CD4-positive, alpha-beta memory T cell (primary cell): ENCODE measurements at regions of chr19 and their contacts with region 1.

Region 1: DNA sequence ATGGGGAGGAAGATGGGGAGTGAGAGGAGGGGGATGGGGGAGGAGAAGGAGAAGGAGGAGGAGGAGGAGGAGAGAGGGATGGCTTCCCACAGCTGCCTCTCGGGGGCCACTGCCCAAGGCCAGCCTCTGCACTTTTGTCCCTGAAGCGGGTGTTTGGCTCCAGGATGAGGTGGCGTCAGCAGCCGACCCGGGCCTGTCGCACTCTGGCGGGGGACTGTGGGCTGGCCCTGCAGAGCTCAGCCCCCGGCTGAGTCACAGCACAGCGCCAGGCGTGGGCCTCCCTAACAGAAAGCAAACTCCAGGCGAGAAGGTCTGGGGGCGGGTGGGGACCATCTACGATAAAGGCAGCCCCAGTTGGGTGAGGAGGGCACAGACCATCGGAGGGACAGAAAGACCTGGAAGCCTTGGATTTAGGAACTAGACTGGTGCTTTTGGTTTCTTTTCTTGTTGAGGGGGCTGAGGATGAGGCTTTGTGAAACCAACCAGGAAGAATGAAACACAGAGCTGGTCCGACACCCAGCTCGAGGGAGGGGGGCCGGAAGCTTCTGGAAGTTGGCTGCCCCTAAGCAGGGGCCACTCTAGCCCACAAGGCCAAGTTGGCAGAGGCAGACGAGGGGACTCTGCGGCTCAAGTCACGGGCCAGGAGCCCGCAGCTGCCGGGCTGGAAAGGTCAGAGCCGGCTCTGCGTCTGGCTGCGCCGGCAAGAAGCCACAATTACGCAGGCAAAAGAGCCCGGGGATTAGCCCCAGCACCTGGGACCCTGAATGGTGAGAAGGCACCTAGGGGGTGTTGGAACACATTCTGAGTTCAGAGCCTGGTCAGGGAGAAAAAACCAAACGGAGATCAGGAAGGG is 18.2 kb downstream of the LSM4 start:
- DNase-seq: peak; percentile 73 to 88 (median 78)
- H3K4me3 ChIP-seq: peak overlapping the region; percentile 82 to 88
- H3K4me3 Mint-ChIP-seq: peak overlapping the region; percentile 89 to 98 (median 95)
- H3K27ac ChIP-seq: peak overlapping the region; percentile 99
- H3K27ac Mint-ChIP-seq: peak overlapping the region; percentile 99 to 100 (median 99)
- H3K4me1 ChIP-seq: peaks cover 70% of the 10 kb centered on the region
- H3K4me1 Mint-ChIP-seq: peaks cover 19 to 54% (median 34%) of the 10 kb centered on the region in 4 donors
- H3K27me3 ChIP-seq: no peaks in the 10 kb centered on the region
- H3K27me3 Mint-ChIP-seq: no peaks in the 10 kb centered on the region

Region 2: GRCh38 chr19:18173572-18174288 is 131.0 kb before region 1 on chr19 and contains the start of gene IFI30:
- CTCF ChIA-PET with region 1: no interaction called
- POLR2A ChIA-PET with region 1: no interaction called
- intact Hi-C with region 1: no loop called
- DNase-seq: peak; percentile 45 to 56 (median 51)
- H3K4me3 ChIP-seq: peak within 1 kb of the TSS; percentile 73 to 77
- H3K4me3 Mint-ChIP-seq: peak within 1 kb of the TSS; percentile 88 to 96 (median 91)
- H3K27ac ChIP-seq: peak within 1 kb of the TSS; percentile 62
- H3K27ac Mint-ChIP-seq: peak within 1 kb of the TSS; percentile 64 to 93 (median 85)
- H3K4me1 ChIP-seq: peaks cover 18% of the 10 kb centered on the region
- H3K4me1 Mint-ChIP-seq: peaks cover 3 to 20% (median 9%) of the 10 kb centered on the region in 4 donors
- H3K27me3 ChIP-seq: no peaks in the 10 kb centered on the region
- H3K27me3 Mint-ChIP-seq: no peaks in the 10 kb centered on the region
- total RNA-seq, gene IFI30: 48.3 to 56.9 TPM

Region 3: DNA sequence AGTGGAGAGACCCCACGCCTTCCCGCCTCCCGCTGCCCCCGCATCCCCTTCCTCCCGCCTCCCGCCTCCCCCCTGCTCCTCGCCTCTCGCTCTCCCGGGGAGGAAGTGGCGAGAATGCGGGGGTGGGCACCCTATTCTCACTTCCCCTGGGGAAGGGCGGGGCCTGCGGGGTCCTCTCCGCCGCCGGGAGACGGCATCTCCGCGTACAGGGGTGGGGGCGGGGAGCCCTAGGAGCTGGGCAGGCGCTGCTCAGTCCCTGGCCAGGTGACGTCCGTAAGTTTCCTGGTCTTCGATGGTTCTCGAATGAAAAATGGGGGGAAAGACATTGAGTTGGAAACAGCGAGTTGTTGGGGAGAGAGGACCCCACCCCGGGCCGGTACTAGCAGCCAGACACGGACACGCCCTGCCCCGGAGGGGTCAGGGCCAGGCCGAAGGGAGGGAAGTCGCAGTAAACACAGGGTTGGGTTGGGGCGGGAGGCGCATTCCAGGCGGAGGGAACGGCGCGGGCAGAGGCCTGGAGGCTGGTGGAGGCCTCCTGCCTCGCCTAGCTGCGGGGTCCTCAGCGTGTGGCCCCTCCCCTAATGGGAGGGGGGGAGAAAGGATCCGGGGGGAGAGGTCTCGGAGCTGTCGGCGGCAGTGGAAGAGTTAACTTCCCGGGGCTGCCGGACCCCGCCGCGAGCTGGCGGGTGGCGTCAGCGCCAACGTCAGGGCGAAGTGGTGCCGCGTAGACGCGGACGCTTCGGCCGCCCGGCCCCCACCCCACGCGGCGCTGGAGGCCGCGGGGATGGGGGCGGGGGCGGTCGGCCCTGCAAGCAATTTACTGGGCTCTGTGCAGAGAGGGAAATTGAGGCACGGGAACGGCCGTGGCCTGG is 12.9 kb before region 1 on chr19:
- CTCF ChIA-PET with region 1: interaction called, 17 read pairs
- POLR2A ChIA-PET with region 1: interaction called, 1,691 read pairs
- intact Hi-C with region 1: loop called (anchors 1 kb)
- DNase-seq: peak; percentile 70 to 85 (median 78)
- H3K4me3 ChIP-seq: peak overlapping the region; percentile 66 to 81
- H3K4me3 Mint-ChIP-seq: peak overlapping the region; percentile 79 to 95 (median 92)
- H3K27ac ChIP-seq: peak overlapping the region; percentile 98
- H3K27ac Mint-ChIP-seq: peak overlapping the region; percentile 79 to 100 (median 100)
- H3K4me1 ChIP-seq: peaks cover 64% of the 10 kb centered on the region
- H3K4me1 Mint-ChIP-seq: peaks cover 35 to 80% (median 49%) of the 10 kb centered on the region in 4 donors
- H3K27me3 ChIP-seq: no peaks in the 10 kb centered on the region
- H3K27me3 Mint-ChIP-seq: no peaks in the 10 kb centered on the region

Region 4: GRCh38 chr19:18322759-18323460 is 18.2 kb after region 1 on chr19 and contains the start of gene LSM4:
- CTCF ChIA-PET with region 1: interaction called, 25 read pairs
- POLR2A ChIA-PET with region 1: interaction called, 105 read pairs
- intact Hi-C with region 1: loop called (anchors 1 kb)
- DNase-seq: peak; percentile 99 to 100 (median 99)
- H3K4me3 ChIP-seq: peak within 1 kb of the TSS; percentile 61 to 81
- H3K4me3 Mint-ChIP-seq: peak within 1 kb of the TSS; percentile 75 to 88 (median 86)
- H3K27ac ChIP-seq: peak within 1 kb of the TSS; percentile 68
- H3K27ac Mint-ChIP-seq: peak within 1 kb of the TSS; percentile 86 to 98 (median 97)
- H3K4me1 ChIP-seq: peaks cover 59% of the 10 kb centered on the region
- H3K4me1 Mint-ChIP-seq: peaks cover 32 to 59% (median 45%) of the 10 kb centered on the region in 4 donors
- H3K27me3 ChIP-seq: no peaks in the 10 kb centered on the region
- H3K27me3 Mint-ChIP-seq: no peaks in the 10 kb centered on the region
- total RNA-seq, gene LSM4: 64.2 to 65.0 TPM

Region 5: DNA sequence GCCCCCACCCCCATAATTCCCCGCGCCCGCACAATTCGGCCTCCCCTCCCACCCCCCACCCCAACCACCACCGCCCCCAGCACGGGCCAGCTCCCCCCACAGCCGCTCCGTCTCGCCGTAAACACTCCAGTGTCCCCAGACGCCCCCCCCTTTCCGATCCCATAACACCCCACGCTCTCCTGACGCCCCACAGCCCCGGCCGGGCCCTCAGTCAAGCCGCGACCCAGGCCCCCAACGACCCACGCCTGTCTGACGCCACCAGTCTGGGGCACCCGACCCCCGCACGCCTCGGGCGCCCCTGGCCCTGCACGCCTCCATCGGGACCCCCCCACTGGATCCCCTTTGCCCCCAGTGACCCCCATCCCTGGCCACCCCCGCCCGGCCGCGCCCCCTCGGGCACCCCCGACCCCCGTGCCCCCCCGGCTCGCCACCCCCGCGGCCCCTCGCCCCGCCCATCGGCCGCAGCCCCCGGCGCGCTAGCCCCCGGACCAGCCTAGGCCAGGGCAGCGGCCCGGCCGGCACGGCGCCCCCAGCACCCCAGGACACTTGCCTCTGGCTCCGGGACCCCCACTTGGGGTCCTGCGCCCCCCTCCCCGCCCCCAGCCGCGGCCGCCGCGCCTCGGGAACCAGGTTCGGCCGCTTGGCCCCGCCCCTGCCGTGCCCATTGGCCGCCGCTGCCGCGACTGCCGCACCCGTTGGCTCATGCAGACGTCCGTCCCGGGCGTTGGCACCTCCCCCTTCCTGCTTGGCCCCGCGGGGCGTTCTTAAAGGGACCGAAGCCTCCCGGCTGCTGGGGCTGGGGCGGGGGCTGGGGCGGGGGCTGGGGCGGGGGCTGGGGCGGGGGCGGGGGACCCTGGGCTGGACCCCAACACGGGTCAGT is 238.5 kb after region 1 on chr19 and contains the start of gene FKBP8:
- CTCF ChIA-PET with region 1: no interaction called
- POLR2A ChIA-PET with region 1: no interaction called
- intact Hi-C with region 1: no loop called
- DNase-seq: peak; percentile 89 to 94 (median 91)
- H3K4me3 ChIP-seq: peak within 1 kb of the TSS; percentile 52 to 59
- H3K4me3 Mint-ChIP-seq: peak within 1 kb of the TSS; percentile 91 to 100 (median 96)
- H3K27ac ChIP-seq: peak within 1 kb of the TSS; percentile 78
- H3K27ac Mint-ChIP-seq: peak within 1 kb of the TSS; percentile 97 to 99 (median 98)
- H3K4me1 ChIP-seq: peaks cover 25% of the 10 kb centered on the region
- H3K4me1 Mint-ChIP-seq: peaks cover 8 to 35% (median 21%) of the 10 kb centered on the region in 4 donors
- H3K27me3 ChIP-seq: no peaks in the 10 kb centered on the region
- H3K27me3 Mint-ChIP-seq: no peaks in the 10 kb centered on the region
- total RNA-seq, gene FKBP8: 231 to 249 TPM